Transverse colon (tissue), 4 donors: ENCODE measurements at regions of chr3 and their contacts with region 1.

Region 1: GRCh38 chr3:155026999-155027591 is 53.0 kb upstream of the MME start:
- DNase-seq: peak; percentile 10
- H3K4me3 ChIP-seq: no peak overlapping the region
- H3K27ac ChIP-seq: peak overlapping the region in 2 of 4 donors; percentile 47 to 53
- H3K4me1 ChIP-seq: peaks cover 0 to 18% (median 5%) of the 10 kb centered on the region in 4 donors
- H3K27me3 ChIP-seq: no peaks in the 10 kb centered on the region
- CTCF ChIP-seq: no peak
- EP300 ChIP-seq: no peak
- POLR2A ChIP-seq: no peak

Region 2: DNA sequence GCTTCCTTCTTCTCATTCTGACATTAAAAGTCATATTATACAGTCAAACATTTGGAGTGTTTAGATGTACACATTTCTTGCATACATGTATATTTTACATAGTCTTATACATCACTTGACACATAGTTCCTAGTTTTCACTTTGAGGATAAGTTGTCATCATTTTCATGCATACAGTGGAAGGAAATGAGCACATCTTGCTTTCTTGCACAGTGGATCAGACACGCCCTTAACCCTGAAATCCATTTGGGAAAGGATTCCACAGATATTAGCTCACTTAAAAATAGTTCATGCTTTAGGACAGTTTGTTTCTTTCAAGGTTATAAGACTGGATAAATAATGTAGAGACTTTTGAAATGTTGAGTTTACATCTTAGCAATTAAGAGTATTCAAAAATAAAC is 95.6 kb before region 1 on chr3:
- in situ Hi-C with region 1: loop called in 1 of 4 experiments (anchors 25 kb)
- intact Hi-C with region 1: no loop called
- DNase-seq: no peak
- H3K4me3 ChIP-seq: no peak overlapping the region
- H3K27ac ChIP-seq: no peak overlapping the region
- H3K4me1 ChIP-seq: no peaks in the 10 kb centered on the region
- H3K27me3 ChIP-seq: no peaks in the 10 kb centered on the region
- CTCF ChIP-seq: no peak
- EP300 ChIP-seq: no peak
- POLR2A ChIP-seq: no peak